ENCODE measurements at regions of chr1 and their contacts with region 1.

Region 1: GRCh38 chr1:156082309-156083091 is at the start of gene MEX3A:
- DNase-seq: no peak
- H3K4me3 ChIP-seq: peak within 1 kb of the TSS; percentile 80
- CTCF ChIP-seq: no peak

Region 2: DNA sequence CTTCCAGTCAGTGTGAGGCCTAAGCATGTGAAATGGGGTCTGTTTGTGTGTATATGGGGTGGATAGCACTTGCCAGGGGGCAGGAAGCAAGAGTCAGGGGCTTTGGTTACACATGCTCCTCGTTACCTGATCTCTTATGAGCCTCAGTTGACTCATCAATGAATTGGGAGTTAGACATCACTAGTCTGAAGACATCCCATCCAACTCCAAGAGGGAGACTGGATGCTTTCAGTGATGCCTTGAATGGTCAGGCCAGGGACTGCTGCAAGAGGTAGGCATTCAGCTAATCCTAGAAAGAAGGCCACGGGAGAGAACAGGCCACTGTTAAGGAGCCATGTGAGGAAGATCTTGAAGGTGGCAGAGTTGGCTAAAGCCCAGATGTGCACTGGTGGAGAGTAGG is 15.2 kb before region 1 on chr1:
- CTCF ChIA-PET with region 1: interaction called, 17 read pairs
- POLR2A ChIA-PET with region 1: no interaction called
- DNase-seq: no peak
- H3K4me3 ChIP-seq: no peak overlapping the region
- CTCF ChIP-seq: no peak

Measured in AG04449 (cell line).